WTC11 (cell line): ENCODE measurements at regions of chr3 and their contacts with region 1.

Region 1: DNA sequence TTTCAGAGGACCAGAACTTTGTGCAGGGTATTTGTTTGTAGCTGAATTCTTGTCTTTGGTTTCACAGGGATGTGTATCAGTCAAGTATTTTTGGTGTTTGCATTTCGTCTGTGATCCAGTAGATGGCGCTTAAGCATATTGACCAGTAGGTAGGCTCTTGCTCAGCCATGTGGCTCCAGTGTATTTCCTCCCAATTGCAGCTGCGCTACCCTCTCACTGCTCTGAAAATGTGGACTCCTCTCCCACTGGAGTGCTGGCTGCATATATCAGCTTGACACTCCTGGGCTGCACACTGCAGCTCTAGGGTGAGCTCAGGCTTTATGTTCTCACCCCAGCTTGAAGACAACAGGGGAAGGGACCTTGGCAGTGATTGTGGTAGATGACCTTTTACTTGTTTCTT is 1264.3 kb upstream of the ALCAM start:
- DNase-seq: no peak
- ATAC-seq: peak; percentile 91
- H3K4me3 Mint-ChIP-seq: no peak overlapping the region
- H3K27ac Mint-ChIP-seq: no peak overlapping the region
- H3K4me1 Mint-ChIP-seq: peaks cover 18% of the 10 kb centered on the region
- H3K27me3 Mint-ChIP-seq: peaks cover 12% of the 10 kb centered on the region
- CTCF ChIP-seq: 0 out of 2 replicates have a peak, but pooled peaks have one; percentile 39

Region 2: GRCh38 chr3:104088738-104089137 is 13.6 kb before region 1 on chr3:
- CTCF ChIA-PET with region 1: interaction called, 12 read pairs
- POLR2A ChIA-PET with region 1: no interaction called
- DNase-seq: no peak
- ATAC-seq: no peak
- H3K4me3 Mint-ChIP-seq: no peak overlapping the region
- H3K27ac Mint-ChIP-seq: no peak overlapping the region
- H3K4me1 Mint-ChIP-seq: no peaks in the 10 kb centered on the region
- H3K27me3 Mint-ChIP-seq: no peaks in the 10 kb centered on the region
- CTCF ChIP-seq: no peak

Region 3: GRCh38 chr3:104198131-104198530 is 95.7 kb after region 1 on chr3:
- CTCF ChIA-PET with region 1: no interaction called
- POLR2A ChIA-PET with region 1: no interaction called
- DNase-seq: no peak
- ATAC-seq: no peak
- H3K4me3 Mint-ChIP-seq: no peak overlapping the region
- H3K27ac Mint-ChIP-seq: no peak overlapping the region
- H3K4me1 Mint-ChIP-seq: peaks cover 3% of the 10 kb centered on the region; the same call in 1 of the 2 replicates
- H3K27me3 Mint-ChIP-seq: no peaks in the 10 kb centered on the region
- CTCF ChIP-seq: no peak